ENCODE measurements at regions of chr11 and their contacts with region 1.

Region 1: DNA sequence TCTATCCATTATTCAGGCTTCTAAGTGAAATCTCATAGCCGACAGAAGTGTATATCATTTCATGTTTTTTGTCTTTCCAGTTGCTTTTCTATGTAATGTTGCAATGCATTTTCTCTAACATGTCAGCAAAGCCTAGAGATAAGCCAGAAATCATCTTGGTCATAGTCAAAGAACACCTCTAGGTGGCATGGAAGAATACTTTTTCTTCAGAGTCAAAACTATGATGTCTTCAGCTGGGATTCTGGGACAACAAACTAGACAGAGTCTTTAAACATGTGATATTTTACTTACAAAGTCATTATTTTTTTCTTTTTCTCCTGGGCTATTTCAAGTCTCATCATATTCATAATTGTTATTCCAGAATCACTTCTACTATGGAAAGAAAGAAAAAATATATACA is 4.4 kb downstream of the GAS2 start:
- DNase-seq: no peak
- H3K4me3 Mint-ChIP-seq: no peak overlapping the region
- H3K27ac Mint-ChIP-seq: no peak overlapping the region
- H3K4me1 Mint-ChIP-seq: peaks cover 17% of the 10 kb centered on the region
- H3K27me3 Mint-ChIP-seq: peaks cover 47% of the 10 kb centered on the region

Region 2: DNA sequence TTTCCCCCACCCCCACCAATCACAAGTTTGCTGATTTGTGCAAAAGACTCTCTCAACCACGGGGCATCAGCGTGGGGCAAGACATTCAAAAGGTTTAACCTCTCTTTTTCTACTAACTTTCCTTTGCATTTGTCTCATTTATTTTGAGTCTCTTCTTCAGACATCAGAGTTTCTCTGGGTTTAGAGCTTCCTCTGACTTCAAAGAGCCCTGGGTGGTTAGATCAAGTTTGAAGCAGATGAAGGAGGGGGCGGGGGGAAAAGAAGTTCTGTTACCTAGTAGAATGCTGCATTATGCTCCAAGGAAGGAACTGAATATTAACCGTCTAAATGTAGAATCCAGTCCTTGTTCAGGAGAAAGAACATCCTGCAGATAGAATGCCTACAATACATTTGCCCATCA is 20.0 kb after region 1 on chr11:
- CTCF ChIA-PET with region 1: no interaction called
- intact Hi-C with region 1: loop called (anchors 2 kb)
- DNase-seq: peak; percentile 55
- H3K4me3 Mint-ChIP-seq: peak overlapping the region; percentile 52
- H3K27ac Mint-ChIP-seq: peak overlapping the region; percentile 65
- H3K4me1 Mint-ChIP-seq: peaks cover 16% of the 10 kb centered on the region
- H3K27me3 Mint-ChIP-seq: no peaks in the 10 kb centered on the region

Region 3: DNA sequence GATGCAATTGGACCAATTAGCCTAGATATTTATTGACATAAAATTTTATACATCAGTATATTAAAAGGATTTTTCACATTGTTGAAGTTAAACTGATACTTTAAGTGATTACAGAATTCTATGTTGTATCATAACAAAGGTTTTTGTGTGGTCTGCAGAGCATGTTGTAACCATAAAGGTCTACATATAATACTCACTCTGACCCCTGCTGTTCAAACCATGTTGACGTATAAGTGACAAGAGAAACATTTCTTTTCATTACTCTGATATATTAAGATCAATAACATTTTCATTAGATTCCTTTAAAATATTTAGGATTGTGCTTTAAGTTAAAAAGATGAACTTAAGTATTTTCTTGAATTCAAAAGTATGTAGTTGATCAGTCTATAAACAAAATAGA is 59.5 kb after region 1 on chr11:
- CTCF ChIA-PET with region 1: interaction called, 5 read pairs
- intact Hi-C with region 1: loop called (anchors 1 kb)
- DNase-seq: peak; percentile 11
- H3K4me3 Mint-ChIP-seq: no peak overlapping the region
- H3K27ac Mint-ChIP-seq: no peak overlapping the region
- H3K4me1 Mint-ChIP-seq: no peaks in the 10 kb centered on the region
- H3K27me3 Mint-ChIP-seq: no peaks in the 10 kb centered on the region

Region 4: DNA sequence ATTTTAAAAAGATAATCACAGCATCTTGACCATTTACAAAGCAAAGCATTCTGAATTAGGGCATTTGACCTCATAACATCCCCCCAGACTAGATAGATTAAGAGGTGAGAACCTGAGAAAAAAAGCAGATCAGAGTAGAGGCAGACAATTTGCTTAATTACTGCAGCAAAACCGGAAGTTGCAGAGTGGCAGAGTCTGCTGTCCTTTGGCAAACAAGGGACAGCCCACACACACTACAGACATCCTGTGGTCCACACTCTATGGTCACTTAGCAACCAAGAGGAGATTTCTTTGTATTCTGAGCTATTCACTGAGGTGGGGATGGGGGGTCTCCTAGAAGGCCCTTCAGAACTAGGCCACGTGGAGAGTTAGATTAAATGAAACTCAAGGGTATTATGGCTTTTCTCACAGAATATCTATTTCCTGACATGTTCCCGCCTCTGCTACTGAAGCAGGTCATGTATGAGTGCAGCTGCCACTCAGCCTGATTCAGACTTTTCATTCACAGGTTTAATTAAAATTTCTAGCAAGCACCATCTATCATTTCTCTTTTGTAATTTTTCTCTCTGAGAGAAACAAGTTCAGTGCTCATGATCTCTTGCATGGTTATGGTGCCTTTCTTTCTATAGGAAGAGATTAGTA is 110.2 kb after region 1 on chr11:
- CTCF ChIA-PET with region 1: interaction called, 5 read pairs
- intact Hi-C with region 1: loop called (anchors 1 kb)
- DNase-seq: no peak
- H3K4me3 Mint-ChIP-seq: no peak overlapping the region
- H3K27ac Mint-ChIP-seq: no peak overlapping the region
- H3K4me1 Mint-ChIP-seq: peaks cover 5% of the 10 kb centered on the region
- H3K27me3 Mint-ChIP-seq: no peaks in the 10 kb centered on the region

Measured in activated naive CD4-positive, alpha-beta T cell treated with anti-CD3 and anti-CD28 coated beads for 36 hours (primary cell).